ENCODE measurements at regions of chr21 and their contacts with region 1.

Region 1: DNA sequence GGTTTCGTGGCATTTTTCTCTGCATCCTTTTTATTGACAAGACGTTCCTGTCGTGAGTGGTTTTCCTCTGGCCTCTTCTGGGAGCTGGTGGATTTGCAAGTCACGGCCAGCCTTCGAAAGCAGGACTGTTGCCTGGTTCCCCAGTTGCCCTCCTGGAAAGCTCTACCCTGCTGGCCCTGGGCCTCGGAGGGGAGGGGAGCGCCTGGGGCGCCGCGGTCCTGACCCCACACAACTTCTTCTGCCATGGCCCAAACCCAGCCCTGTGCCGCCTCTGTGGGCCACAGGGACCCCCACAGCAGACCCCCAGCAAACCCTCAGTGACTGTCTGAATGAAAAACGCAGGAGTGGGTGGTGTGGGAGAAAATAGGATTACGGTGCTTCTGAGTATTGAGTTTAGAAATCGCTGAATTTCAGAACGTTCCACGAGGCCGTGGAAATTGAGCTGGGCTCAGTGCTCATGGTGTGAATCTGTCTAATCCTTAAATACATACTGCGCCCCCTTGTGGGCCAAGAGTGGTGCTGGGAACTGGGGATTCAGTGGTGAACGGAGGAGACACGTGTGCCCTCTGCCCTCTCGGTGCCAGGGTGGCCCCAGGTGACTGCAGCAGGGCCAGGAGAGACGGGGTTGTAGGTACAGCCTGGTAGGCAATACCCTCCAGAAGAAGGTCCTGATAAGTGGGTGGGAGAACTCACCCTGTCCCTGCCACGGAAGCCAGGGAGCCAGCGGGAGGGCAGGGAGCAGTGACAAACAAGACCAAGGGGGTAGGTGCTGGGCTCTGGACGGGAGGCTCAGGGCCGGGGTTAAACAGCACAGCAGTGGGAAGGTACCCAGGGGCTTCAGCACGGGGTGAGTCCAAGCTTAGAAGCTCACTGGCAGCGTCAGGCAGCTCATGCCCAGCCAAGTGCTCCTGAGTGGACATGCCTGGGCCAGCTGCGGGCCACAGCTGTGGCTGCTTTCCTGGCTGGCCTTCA is 101.2 kb upstream of the COL6A1 start:
- DNase-seq: peak; percentile 32
- H3K4me3 ChIP-seq: no peak overlapping the region
- H3K27ac ChIP-seq: peak overlapping the region in 1 of 2 experiments; percentile 39; a peak in 1 of 4 replicates
- H3K4me1 ChIP-seq: peaks cover 9 to 40% of the 10 kb centered on the region in 2 experiments; a peak in 3 of 4 replicates
- H3K27me3 ChIP-seq: no peaks in the 10 kb centered on the region
- CTCF ChIP-seq: peak; percentile 73
- EP300 ChIP-seq: no peak
- RAD21 ChIP-seq: peak; percentile 63

Region 2: DNA sequence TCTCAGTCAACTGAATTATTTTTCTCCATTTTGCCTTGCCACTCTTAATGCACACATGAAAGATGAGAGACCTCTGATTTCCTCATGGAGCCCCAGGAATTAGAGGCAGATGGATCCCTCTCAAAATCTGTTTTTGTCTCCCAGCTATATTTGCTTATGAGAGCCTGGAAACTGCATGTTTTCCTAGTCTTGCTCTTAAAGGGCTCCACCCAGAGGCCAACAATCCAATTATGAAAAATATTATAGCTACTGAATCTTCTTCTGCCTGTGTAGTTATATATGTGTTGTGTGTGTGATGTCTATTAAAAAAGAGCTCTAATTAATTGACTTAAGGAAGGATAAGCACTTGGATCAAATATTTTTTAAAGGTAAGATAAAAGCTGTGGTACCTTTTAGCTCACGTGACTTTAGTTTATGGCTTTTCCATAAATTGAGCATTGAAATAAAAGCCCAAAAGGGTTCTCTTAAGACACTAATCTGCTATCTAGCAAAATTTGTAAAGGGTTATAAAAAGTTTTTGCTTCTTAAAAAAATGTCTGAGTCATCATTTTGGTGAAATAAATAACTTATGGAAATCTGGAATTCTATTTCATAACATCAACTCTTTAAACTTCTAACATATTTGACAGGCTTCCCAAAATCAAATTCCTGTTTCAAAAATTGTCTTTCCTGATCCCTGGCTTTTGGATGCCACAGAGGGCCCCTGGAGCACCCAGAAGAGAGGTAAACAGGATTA is 1137.8 kb before region 1 on chr21:
- CTCF ChIA-PET with region 1: no interaction called
- POLR2A ChIA-PET with region 1: no interaction called
- DNase-seq: no peak
- H3K4me3 ChIP-seq: no peak overlapping the region
- H3K27ac ChIP-seq: no peak overlapping the region
- H3K4me1 ChIP-seq: no peaks in the 10 kb centered on the region
- H3K27me3 ChIP-seq: no peaks in the 10 kb centered on the region; the same call in none of the 2 replicates
- CTCF ChIP-seq: peak; percentile 37; the same call in 1 of the 2 replicates
- EP300 ChIP-seq: no peak
- RAD21 ChIP-seq: peak; percentile 48; the same call in 1 of the 2 replicates

Region 3: DNA sequence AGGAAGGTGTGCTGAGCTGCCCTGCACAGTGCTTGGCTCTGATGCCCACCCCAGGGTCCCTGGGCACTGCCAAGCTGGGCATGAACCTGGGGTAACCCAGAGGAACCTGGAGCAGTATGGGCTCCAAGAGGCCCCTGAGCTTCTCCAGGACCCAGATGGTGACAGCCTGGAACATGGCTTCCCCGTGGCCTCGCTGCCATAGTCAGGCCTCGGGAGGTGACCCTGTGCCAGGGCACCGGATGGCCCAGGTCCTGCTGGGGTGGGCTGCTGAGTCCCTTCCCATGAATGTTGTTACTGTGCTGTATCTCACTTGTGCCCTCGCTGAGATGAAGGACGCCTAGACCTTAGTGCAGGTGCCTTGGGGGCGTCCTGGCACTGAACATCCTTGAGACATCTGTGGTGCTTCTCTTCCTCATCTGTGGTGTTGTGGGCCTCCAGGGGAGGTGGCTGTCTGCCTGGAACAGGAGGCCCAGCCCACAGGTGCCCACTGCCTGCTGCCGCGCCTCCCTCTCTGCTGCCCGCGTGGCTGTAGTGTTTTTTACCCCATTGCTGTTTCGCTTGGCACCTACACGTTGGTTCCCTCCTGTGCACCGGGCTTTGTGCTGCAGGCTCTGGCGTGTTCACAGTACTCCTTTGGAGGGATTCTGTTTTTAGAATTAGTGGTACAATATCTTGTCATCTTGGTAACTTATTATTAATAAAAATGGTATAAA is 76.6 kb before region 1 on chr21:
- CTCF ChIA-PET with region 1: no interaction called
- POLR2A ChIA-PET with region 1: no interaction called
- DNase-seq: no peak
- H3K4me3 ChIP-seq: no peak overlapping the region
- H3K27ac ChIP-seq: peak overlapping the region in 1 of 2 experiments; percentile 5; a peak in 1 of 4 replicates
- H3K4me1 ChIP-seq: peaks cover 0 to 40% of the 10 kb centered on the region in 2 experiments; a peak in 1 of 4 replicates
- H3K27me3 ChIP-seq: no peaks in the 10 kb centered on the region
- CTCF ChIP-seq: no peak
- EP300 ChIP-seq: no peak
- RAD21 ChIP-seq: no peak

Region 4: DNA sequence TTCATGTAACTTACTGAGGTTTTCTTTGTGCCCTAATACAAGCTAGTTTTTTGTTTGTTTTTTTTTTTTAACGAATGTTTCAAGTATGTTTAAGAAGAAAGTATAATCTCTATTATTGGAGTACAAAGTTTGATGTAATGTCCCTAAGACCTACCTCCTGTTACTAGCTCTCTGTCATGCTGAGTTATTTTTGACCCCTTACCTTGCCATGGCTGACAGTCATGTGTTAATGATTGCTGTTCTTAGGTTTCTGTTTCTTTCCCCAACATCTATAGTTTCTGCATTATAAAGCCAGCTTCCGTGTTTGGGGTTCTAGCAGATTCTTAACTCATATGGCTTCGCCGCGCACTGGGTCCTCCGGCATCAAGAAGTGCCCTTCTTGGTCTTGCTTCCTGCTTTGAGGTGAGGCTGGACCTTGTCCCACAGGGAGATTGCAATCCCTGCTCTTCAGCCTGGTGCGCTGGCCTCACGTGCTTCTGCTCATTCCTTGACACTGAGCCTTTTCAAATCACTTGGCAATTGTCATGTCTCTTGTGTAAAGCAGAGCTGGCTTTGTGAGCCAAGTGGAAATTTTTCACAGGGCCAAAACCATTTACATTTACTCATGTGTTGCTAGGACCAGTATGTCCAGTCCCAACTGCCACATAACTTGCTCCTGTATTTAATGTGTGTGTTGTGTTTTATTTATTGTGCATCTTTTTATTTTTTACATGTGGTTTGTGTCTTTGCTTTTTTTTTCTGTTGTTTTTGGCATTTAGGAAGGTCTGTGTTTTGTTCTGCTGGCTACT is 33.8 kb before region 1 on chr21:
- CTCF ChIA-PET with region 1: interaction called, 13 read pairs
- POLR2A ChIA-PET with region 1: no interaction called
- DNase-seq: no peak
- H3K4me3 ChIP-seq: no peak overlapping the region
- H3K27ac ChIP-seq: no peak overlapping the region
- H3K4me1 ChIP-seq: peaks cover 0 to 26% of the 10 kb centered on the region in 2 experiments; a peak in 2 of 4 replicates
- H3K27me3 ChIP-seq: no peaks in the 10 kb centered on the region
- CTCF ChIP-seq: no peak
- EP300 ChIP-seq: no peak
- RAD21 ChIP-seq: no peak

Region 5: GRCh38 chr21:45865106-45865832 is 15.1 kb before region 1 on chr21:
- CTCF ChIA-PET with region 1: interaction called, 23 read pairs
- POLR2A ChIA-PET with region 1: no interaction called
- DNase-seq: no peak
- H3K4me3 ChIP-seq: no peak overlapping the region
- H3K27ac ChIP-seq: peak overlapping the region in 1 of 2 experiments; percentile 86; a peak in 2 of 4 replicates
- H3K4me1 ChIP-seq: peaks cover 26% of the 10 kb centered on the region in 2 experiments
- H3K27me3 ChIP-seq: no peaks in the 10 kb centered on the region
- CTCF ChIP-seq: no peak
- EP300 ChIP-seq: peak in 1 of 2 experiments; percentile 89; a peak in 2 of 4 replicates
- RAD21 ChIP-seq: no peak

Region 6: DNA sequence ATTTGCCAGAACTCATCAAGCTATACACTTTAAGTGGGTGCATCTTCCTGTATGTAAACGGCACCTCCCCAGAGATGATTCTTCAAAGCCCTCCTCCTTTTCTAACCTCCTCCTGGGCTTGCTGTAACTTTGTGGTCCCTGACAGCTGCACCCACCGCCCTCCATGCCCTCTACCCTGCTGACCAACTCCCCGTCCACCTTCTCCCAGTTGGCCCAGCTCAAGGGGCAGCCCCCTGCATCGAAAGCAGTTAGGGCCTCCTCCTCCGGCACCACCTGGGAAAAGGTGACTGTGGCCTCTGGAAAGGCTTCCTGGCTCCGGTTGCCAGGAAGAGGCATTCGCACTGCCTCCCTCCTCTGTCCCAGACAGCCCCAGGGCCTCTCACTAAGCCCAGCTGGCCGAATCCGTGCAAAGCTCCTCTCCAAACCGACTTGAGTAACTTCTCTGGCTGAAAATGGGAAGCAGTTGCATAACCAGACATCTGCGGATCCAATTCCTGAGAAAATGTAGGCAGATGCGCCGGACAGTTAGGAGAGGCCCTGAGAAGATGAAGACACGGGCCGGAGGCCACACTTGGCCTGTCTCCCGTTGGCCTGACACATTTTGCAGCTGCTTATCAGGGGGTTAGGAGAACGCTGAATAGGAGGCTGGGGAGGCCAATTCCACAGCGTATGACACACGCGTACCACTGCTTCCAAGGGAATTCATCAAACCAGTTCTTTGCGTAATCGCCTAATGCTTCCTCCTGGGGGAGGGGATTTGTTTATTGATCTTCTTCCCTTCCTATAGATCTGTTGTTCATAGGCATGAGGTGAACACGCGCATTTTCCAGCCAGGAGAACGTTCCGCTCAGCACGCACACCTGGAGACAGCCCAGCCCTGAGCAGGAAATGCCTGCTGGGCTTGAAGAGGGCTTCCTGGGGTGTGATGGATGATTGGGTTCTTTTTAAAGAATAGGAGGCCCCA is 168.8 kb after region 1 on chr21:
- CTCF ChIA-PET with region 1: no interaction called
- POLR2A ChIA-PET with region 1: no interaction called
- DNase-seq: no peak
- H3K4me3 ChIP-seq: no peak overlapping the region
- H3K27ac ChIP-seq: no peak overlapping the region
- H3K4me1 ChIP-seq: no peaks in the 10 kb centered on the region; a peak in 1 of 4 replicates
- H3K27me3 ChIP-seq: no peaks in the 10 kb centered on the region
- CTCF ChIP-seq: no peak
- EP300 ChIP-seq: no peak
- RAD21 ChIP-seq: no peak